Colonic mucosa (tissue), 4 donors: ENCODE measurements at regions of chr2 and their contacts with region 1.

Region 1: GRCh38 chr2:178522950-178523595 is 42.8 kb downstream of the PLEKHA3 start:
- DNase-seq: peak; percentile 83
- H3K4me3 ChIP-seq: peak overlapping the region; percentile 60
- H3K27ac ChIP-seq: no peak overlapping the region
- H3K4me1 ChIP-seq: no peaks in the 10 kb centered on the region
- H3K27me3 ChIP-seq: no peaks in the 10 kb centered on the region
- CTCF ChIP-seq: peak; percentile 44

Region 2: DNA sequence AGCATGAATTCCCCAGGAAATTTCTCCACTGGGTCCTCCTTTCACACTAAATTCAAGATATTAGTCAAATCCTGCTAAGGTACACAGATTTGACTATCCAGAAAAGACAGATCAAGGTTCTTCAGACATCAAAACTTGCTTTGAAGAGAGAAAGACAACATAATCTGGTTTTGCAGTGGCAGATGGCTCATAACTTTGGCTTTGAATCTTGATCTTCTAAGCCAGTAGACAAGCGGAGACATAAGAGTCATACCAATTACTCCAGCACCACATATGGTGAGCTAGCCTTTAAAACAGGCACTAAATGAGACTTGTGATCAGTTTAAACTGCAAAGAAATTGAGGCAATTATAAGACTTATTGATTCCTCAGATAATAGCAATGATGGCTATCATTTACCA is 479.8 kb before region 1 on chr2:
- intact Hi-C with region 1: no loop called
- DNase-seq: no peak
- H3K4me3 ChIP-seq: no peak overlapping the region
- H3K27ac ChIP-seq: no peak overlapping the region
- H3K4me1 ChIP-seq: no peaks in the 10 kb centered on the region
- H3K27me3 ChIP-seq: no peaks in the 10 kb centered on the region
- CTCF ChIP-seq: no peak

Region 3: DNA sequence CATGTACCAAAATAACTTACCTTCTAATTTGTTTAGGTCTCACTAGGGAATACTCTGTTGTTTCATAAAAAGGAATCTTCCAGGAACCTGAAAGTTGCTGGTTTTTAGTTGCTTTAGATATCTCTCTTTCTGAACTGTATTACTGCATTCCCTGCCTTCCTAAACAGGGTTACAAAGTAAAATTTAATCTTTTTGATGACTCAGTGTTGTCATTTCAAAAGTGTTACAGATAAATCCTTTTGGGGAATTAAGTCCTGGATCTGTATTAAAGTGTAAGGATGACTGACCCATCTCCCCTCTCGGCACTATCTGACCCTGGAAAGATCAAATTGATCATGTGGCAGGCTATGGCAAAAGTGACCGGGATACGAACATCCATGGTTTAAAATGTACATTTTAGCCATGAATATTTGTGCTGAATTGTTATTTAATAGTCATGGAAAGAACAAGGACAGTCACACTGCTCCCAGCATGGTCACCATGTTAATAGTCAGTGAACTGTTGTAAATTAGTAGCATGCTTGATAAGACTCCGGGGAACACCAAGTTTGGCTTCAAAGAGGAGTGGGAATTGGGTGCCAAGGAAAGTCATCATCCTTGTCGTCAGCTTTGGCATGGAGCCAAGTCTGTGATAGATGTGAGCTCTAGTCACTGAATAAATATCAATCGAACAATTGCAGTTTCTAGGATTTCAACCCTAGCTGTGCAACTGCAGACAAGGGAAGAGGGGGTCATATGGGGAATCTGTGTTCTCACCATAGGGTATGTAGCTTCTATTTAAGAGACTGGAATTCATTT is 38.6 kb before region 1 on chr2:
- intact Hi-C with region 1: loop called (anchors 5 kb)
- DNase-seq: peak; percentile 33
- H3K4me3 ChIP-seq: no peak overlapping the region
- H3K27ac ChIP-seq: no peak overlapping the region
- H3K4me1 ChIP-seq: peaks cover 12% of the 10 kb centered on the region
- H3K27me3 ChIP-seq: no peaks in the 10 kb centered on the region
- CTCF ChIP-seq: no peak